ENCODE measurements at regions of chr16 and their contacts with region 1.

Region 1: DNA sequence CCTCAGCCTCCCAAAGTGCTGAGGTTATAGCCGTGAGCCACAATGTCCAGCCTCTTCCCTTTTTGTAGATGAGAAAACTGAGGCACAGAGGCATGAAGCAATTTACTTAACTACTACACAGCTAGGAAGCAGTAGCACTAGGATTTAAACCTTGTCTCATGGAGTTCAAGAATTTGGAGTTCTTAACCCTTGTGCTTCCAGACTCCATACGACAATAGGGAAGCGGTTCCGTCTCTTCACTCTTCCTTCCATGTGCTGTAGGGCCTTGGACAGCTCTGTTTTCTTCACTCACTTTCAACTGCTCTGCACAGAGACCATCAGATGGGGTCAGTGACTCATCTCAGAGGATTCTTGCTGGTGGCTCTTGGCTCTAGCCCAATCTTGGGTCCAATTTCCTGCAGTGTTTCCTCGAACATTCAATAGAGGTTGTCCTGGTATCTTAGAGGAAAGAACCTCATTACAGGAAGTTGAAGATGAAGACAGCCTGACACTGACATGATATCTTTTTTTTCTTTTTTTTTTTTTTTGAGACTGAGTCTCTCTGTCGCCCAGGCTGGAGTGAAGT is 19.3 kb downstream of the ITGAL start:
- DNase-seq: peak; percentile 53 to 90 (median 70)
- ATAC-seq: peak; percentile 94
- H3K4me3 ChIP-seq: no peak overlapping the region
- H3K27ac ChIP-seq: peak overlapping the region; percentile 54
- H3K4me1 ChIP-seq: peaks cover 7 to 21% of the 10 kb centered on the region in 2 experiments; a peak in 4 of 5 replicates
- H3K27me3 ChIP-seq: no peaks in the 10 kb centered on the region
- CTCF ChIP-seq: peak; percentile 22 to 61 (median 23); a peak in 3 of 6 replicates
- EP300 ChIP-seq: peak; percentile 53
- POLR2A ChIP-seq: no peak; the same call in 1 of the 2 replicates
- RAD21 ChIP-seq: peak; percentile 54 to 75

Region 2: DNA sequence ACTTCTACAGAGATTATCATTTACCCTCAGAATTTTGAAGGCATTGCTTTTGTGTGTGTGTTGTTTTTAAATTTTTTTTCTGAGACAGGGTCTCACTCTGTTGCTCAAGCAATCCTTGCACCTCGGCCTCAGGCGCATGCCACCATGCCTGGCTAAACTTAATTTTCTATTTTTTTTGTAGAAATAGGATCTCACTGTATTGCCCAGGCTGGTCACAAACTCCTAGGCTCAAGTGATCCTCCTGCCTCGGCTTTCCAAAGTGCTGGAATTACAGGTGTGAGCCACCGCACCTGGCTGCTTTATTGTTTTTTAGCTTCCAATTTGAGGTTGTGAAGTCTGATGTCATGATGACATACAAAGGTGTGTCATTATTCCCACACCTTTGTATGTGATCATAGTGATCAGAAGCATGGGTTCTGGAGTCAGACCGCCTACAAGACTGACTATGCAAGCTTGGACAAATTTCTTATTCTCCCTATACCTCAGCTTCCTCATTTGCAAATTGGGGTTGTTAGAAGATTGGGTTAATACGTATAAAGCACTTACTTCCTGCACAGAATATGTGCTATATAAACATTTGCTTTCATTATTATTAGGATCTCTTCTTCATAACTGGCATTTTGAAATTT is 52.0 kb before region 1 on chr16:
- CTCF ChIA-PET with region 1: no interaction called
- POLR2A ChIA-PET with region 1: no interaction called
- in situ Hi-C with region 1: no loop called
- intact Hi-C with region 1: no loop called
- DNase-seq: no peak
- ATAC-seq: no peak
- H3K4me3 ChIP-seq: no peak overlapping the region
- H3K27ac ChIP-seq: no peak overlapping the region
- H3K4me1 ChIP-seq: peaks cover 0 to 7% of the 10 kb centered on the region in 2 experiments; a peak in 2 of 5 replicates
- H3K27me3 ChIP-seq: no peaks in the 10 kb centered on the region
- CTCF ChIP-seq: no peak
- EP300 ChIP-seq: no peak
- POLR2A ChIP-seq: no peak
- RAD21 ChIP-seq: no peak

Region 3: GRCh38 chr16:30526823-30527635 is 35.2 kb after region 1 on chr16:
- CTCF ChIA-PET with region 1: no interaction called
- POLR2A ChIA-PET with region 1: interaction called, 5 read pairs
- in situ Hi-C with region 1: no loop called
- intact Hi-C with region 1: loop called (anchors 5 kb)
- DNase-seq: peak; percentile 95 to 99 (median 96)
- ATAC-seq: peak; percentile 95
- H3K4me3 ChIP-seq: peak overlapping the region; percentile 78
- H3K27ac ChIP-seq: peak overlapping the region; percentile 97
- H3K4me1 ChIP-seq: peaks cover 36 to 67% of the 10 kb centered on the region in 2 experiments; a peak in 4 of 5 replicates
- H3K27me3 ChIP-seq: no peaks in the 10 kb centered on the region
- CTCF ChIP-seq: peak; percentile 20 to 37 (median 31); a peak in 4 of 6 replicates
- EP300 ChIP-seq: no peak
- POLR2A ChIP-seq: peak; percentile 91
- RAD21 ChIP-seq: peak in 1 of 2 experiments; percentile 32; a peak in 1 of 4 replicates

Region 4: GRCh38 chr16:30602616-30603277 is 110.9 kb after region 1 on chr16:
- CTCF ChIA-PET with region 1: no interaction called
- POLR2A ChIA-PET with region 1: interaction called, 3 read pairs
- in situ Hi-C with region 1: no loop called
- intact Hi-C with region 1: loop called (anchors 5 kb)
- DNase-seq: no peak
- ATAC-seq: no peak
- H3K4me3 ChIP-seq: no peak overlapping the region
- H3K27ac ChIP-seq: no peak overlapping the region
- H3K4me1 ChIP-seq: peaks cover 0 to 12% of the 10 kb centered on the region in 2 experiments; a peak in 2 of 5 replicates
- H3K27me3 ChIP-seq: no peaks in the 10 kb centered on the region
- CTCF ChIP-seq: no peak
- EP300 ChIP-seq: no peak
- POLR2A ChIP-seq: 0 out of 2 replicates have a peak, but pooled peaks have one; percentile 35
- RAD21 ChIP-seq: no peak

Region 5: DNA sequence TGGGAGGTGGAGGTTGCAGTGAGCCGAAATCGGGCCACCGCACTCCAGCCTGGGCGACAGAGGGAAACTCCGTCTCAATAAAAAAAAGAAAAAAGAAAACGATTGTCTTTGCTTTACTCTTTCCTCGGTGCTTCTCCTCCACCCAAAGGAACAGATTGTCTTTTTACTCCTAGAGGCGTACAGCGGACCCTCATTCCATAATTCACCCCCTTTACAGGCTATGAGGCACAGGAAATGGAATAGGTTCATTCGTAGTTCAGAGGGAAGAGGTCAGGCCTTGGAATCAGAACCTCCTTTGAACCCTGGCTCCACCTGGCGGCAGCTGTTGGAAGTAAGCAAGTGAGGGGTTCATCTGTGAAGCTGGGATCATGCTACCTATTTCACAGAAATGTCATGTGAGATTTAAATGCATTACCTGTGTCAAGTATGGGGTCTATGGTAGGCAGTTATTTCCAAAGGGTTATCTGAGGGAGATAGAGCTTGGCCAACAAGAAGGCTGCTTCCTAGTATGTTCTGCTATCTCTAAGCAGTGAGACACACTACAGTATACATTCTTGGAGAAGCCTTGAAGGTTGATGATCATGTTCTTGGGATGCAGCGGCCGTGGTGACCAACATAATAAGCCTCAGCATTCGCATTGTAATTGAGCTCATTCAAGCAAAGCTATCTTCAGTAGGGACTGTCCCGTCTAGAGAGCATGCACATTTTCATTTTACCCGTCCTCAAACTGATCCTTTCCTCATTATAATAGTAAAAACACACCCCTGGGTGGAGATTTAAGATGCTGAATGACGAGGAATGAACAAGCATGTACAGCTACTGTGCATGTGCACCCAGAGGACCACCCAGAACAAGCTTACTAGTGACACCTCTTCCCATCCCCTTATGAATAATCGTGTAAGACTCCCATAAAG is 137.1 kb after region 1 on chr16:
- CTCF ChIA-PET with region 1: interaction called, 4 read pairs
- POLR2A ChIA-PET with region 1: no interaction called
- in situ Hi-C with region 1: no loop called
- intact Hi-C with region 1: loop called (anchors 1 kb)
- DNase-seq: peak; percentile 68 to 92 (median 75)
- ATAC-seq: peak; percentile 98
- H3K4me3 ChIP-seq: no peak overlapping the region
- H3K27ac ChIP-seq: peak overlapping the region; percentile 41
- H3K4me1 ChIP-seq: peaks cover 4 to 15% of the 10 kb centered on the region in 2 experiments; a peak in 2 of 5 replicates
- H3K27me3 ChIP-seq: no peaks in the 10 kb centered on the region
- CTCF ChIP-seq: peak; percentile 86 to 95 (median 91)
- EP300 ChIP-seq: peak; percentile 34; the same call in 1 of the 2 replicates
- POLR2A ChIP-seq: no peak
- RAD21 ChIP-seq: peak; percentile 90 to 95

Region 6: DNA sequence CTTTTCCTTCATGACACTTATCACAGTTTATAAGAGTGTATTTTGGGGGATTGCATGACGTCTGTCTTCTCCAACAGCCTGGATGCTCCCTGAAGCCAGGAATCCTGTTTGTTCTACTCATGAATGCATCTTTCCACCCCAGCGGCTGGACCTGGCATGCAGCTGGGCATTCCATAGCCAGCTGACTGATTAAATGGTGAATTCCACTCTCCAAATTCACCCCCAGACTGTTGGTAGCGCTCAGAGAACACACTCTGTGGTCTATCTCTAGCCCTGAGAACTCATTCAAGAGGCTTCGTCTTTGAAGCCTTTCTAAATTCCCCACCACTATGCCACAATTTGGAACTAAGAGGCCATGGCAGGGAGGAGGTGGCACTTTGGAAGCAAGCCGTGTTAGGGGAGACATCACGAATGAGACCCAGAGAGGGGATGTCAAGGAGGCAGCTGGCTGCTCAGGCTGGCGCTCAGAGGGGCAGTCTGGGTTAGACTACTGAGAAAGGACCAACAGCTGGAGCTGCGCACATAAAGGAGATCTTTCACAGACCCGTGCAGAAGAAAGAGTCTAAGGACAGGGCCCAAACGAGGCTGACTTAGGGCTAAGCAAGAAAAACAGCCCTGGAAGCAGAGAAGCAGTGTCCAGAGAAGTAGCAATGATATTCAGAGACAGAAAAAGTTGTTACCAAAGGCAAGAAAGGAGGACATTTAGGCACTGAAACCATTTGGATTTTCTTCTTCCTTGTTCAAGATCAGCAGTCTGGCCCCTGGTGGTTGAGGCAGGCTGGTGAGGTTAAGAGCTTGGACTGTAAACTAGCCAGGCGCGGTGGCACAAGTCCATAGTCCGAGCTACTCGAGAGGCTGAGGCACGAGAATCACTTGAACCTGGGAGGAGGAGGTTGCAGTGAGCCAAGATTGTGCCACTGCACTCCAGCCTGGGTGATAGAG is 337.6 kb after region 1 on chr16:
- CTCF ChIA-PET with region 1: no interaction called
- POLR2A ChIA-PET with region 1: no interaction called
- in situ Hi-C with region 1: no loop called
- intact Hi-C with region 1: no loop called
- DNase-seq: peak in 1 of 4 experiments; percentile 22
- ATAC-seq: peak; percentile 68
- H3K4me3 ChIP-seq: no peak overlapping the region
- H3K27ac ChIP-seq: no peak overlapping the region
- H3K4me1 ChIP-seq: peaks cover 0 to 5% of the 10 kb centered on the region in 2 experiments; a peak in 1 of 5 replicates
- H3K27me3 ChIP-seq: no peaks in the 10 kb centered on the region
- CTCF ChIP-seq: peak in 2 of 3 experiments; percentile 15 to 18; a peak in 1 of 6 replicates
- EP300 ChIP-seq: no peak
- POLR2A ChIP-seq: no peak
- RAD21 ChIP-seq: no peak

Region 7: DNA sequence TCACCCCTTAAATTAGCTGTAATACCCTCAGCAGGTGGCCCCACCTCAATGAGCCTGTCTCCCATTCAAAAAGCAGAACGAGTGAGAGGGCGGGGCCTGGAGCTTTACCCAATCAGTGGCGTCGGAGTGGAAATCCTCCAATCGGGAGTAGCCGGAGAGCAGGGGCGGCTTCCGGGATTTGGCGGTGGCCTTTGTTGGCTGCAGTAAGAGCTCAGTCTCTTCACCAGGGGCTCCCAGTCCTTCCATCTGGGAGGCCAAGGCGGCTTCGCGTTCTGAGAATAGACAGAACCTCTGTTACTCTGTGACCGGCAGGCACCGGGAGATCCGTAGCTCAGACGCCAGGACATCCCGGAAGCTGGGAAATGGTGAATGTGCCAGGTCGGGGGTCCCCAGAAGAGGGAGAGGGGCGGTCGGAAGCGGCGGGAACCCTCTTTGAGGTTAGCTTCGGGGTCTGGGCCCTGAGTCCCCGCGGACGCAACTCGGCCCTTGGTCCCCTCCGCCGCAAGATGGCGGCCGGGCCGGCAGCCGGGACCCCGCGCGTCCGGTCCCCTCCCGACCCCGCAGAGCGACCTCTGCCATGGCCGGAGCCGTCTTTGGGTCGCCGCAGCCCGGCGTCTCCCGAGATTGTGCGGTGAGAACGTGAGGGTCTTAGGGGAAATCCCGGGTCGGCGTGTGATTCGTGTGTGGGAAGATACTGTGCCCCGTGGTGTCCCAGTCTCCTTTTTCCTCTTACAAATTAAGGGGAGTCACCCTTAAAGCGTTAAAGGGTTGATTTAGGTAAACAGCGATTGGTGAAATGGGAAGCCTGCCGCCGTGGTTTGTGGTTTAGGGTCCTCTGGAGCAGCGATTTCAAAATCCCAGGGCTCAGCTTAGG is 1221.5 kb after region 1 on chr16:
- CTCF ChIA-PET with region 1: no interaction called
- POLR2A ChIA-PET with region 1: no interaction called
- in situ Hi-C with region 1: no loop called
- intact Hi-C with region 1: no loop called
- DNase-seq: peak; percentile 94 to 97 (median 96)
- ATAC-seq: peak; percentile 96
- H3K4me3 ChIP-seq: peak overlapping the region; percentile 92
- H3K27ac ChIP-seq: peak overlapping the region; percentile 96
- H3K4me1 ChIP-seq: peaks cover 11 to 13% of the 10 kb centered on the region in 2 experiments
- H3K27me3 ChIP-seq: no peaks in the 10 kb centered on the region
- CTCF ChIP-seq: no peak
- EP300 ChIP-seq: no peak
- POLR2A ChIP-seq: peak; percentile 98
- RAD21 ChIP-seq: no peak